AG04449 (cell line): ENCODE measurements at regions of chr5 and their contacts with region 1.

Region 1: DNA sequence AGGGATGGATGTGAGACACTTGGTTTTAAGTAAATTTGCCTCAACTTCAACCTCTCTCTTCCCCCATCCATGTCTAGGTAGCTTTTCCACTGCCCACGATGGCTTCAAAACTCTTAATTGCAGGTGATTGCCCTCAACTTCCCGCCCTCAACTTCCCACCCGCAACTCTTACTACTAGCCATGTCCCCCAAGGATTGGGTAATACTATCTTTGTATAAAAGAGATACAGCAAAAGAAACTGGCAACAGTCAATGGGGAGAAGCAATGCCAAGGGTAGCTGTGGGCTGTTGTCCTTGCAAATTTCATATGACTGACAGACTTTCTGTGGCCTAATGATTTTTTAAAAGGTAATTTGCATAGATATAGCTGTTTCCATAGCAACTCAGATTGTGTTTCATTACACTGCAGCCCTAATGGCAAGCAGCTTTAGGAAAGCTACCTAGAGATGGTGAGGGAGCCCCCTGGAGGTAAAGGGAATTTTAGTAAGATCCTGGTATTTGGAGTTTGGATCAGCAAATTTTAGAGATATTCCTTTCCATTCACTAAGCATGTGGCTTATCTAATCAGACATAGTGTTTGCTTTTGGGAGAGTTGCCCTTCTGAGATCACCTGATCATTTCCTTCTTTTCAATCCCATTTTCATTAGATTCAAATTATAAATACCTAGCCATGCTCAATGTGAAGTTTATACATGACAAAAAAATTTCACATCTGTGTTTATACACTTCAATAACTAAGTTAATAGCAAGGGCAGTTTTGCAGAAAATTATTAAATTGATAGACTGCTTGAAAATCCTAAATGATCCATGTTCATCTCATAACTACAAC is 421.6 kb upstream of the DAP start:
- DNase-seq: peak; percentile 2
- H3K4me3 ChIP-seq: no peak overlapping the region
- CTCF ChIP-seq: peak; percentile 50

Region 2: DNA sequence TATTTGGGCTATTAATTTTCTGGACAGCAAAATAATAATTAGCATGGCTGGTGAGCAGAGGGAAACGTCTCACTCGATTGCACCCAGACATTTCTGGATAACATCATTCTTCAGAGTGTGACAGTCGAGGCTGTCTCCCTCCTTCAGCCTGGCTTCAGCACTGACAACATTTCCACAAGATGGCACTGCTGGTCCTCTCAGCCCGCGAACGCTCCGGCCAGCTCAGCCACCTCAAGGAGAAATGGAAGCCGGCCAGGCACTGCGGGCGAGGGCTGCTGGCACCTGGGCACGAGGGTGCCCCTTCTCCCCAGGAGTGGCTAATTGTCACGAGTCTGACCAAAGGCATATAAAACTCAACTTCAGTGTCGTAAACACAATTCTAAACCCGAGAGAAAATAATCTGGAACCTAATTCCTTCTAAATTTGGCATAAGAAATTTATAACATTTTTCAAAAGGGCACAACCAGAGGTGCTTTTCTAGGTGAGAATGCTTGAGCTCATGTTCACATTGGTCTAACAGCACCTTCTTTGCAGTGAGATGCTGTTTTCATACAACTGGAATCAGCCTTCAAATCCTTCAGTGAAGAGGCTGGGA is 487.5 kb before region 1 on chr5:
- CTCF ChIA-PET with region 1: interaction called, 33 read pairs
- POLR2A ChIA-PET with region 1: no interaction called
- DNase-seq: no peak
- H3K4me3 ChIP-seq: no peak overlapping the region
- CTCF ChIP-seq: peak; percentile 82